ENCODE measurements at regions of chr2 and their contacts with region 1.

Region 1: DNA sequence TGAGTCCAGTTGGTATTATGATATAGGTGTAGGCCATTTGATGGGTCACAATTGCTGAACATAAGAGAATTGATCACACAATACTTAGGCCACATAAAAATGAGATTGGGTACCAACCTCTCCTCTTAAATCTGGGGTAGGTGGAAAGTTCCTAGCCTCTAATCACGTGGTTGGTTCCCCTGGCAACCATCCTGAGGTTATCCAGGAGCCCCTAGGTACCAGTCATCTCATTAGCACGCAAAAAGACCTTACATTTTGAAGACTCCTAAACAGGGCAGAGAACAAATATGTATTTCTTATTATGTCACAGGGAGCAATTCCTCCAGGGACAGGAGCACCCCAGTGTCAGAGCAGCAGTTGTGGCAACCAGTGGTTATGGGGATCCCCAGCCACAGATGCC is 12.7 kb upstream of the SELENOI start:
- DNase-seq: no peak

Region 2: DNA sequence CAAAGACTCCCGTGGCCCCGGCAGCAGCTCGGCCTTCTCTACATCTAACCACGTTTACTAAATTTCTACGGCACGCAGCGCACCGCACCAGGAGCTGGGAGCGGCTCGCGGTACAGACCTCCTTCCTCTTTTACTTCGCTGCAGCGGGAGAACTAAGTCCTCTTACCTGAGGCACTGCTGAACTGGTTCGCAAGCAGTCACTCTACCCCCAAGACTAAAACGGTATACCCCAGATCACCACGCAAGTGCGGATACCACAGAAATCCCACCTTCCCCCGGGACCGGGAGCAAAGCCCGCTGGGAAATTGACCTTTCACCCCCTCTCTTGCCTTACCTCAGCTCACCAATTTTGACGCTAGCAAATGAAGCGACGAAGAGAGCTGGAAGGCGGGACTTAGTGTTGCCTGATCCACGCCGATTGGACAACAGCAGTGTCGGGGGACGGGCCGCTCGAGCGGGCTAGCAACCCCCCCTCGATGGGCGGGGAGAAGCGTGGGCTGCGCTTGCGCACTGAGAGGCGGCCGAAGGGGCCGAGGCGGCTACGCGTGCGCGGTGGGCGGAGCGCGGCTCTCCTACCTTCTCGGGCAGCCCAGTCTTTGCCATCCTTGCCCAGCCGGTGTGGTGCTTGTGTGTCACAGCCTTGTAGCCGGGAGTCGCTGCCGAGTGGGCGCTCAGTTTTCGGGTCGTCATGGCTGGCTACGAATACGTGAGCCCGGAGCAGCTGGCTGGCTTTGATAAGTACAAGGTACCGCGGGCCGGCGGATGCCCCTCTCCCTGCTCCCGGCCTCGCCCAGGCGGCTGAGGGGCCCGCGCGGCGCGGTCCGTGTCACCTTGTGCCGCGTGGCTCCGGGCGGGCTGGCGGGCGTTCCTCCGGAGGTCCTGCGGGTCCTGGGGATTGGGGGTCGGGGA is 12.5 kb after region 1 on chr2 and contains the start of gene SELENOI:
- CTCF ChIA-PET with region 1: interaction called, 4 read pairs
- POLR2A ChIA-PET with region 1: interaction called, 18 read pairs
- DNase-seq: peak; percentile 97

Region 3: DNA sequence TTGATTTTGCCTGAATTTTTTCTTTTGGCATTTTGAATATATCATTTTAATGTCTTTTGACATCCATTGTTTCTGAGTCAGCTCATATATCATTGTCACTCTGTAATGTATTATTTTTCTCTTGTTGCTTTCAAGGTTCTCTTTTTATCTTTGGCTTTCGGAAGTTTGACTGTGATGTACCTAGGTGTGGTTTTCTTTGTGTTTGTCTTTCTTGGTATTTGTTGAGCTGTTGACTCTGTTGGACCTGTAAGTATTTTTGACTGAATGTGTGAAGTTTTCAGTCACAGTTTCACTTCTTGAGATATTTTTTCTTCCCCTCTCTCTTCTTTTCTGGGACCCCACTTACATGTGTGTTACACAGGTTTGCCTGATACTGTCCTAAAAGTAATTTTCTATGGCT is 43.5 kb after region 1 on chr2:
- CTCF ChIA-PET with region 1: no interaction called
- POLR2A ChIA-PET with region 1: no interaction called
- DNase-seq: no peak